Right cardiac atrium (tissue), 5 donors: ENCODE measurements at regions of chr19 and their contacts with region 1.

Region 1: GRCh38 chr19:18571564-18572300 is at the start of gene UBA52:
- DNase-seq: peak; percentile 99
- ATAC-seq: peak; percentile 96 to 97
- H3K4me3 ChIP-seq: peak within 1 kb of the TSS; percentile 78
- H3K27ac ChIP-seq: peak within 1 kb of the TSS; percentile 88
- H3K4me1 ChIP-seq: peaks cover 8% of the 10 kb centered on the region
- H3K27me3 ChIP-seq: no peaks in the 10 kb centered on the region
- total RNA-seq, gene UBA52: 712 to 793 (median 725) TPM

Region 2: GRCh38 chr19:18239303-18239702 is 332.4 kb before region 1 on chr19:
- intact Hi-C with region 1: no loop called
- DNase-seq: peak in 1 of 3 donors; percentile 29
- ATAC-seq: no peak
- H3K4me3 ChIP-seq: no peak overlapping the region
- H3K27ac ChIP-seq: no peak overlapping the region
- H3K4me1 ChIP-seq: no peaks in the 10 kb centered on the region
- H3K27me3 ChIP-seq: no peaks in the 10 kb centered on the region

Region 3: GRCh38 chr19:18450931-18451845 is 120.5 kb before region 1 on chr19:
- intact Hi-C with region 1: loop called in 1 of 4 experiments (anchors 10 kb)
- DNase-seq: peak; percentile 84 to 95 (median 95)
- ATAC-seq: peak; percentile 83 to 84
- H3K4me3 ChIP-seq: no peak overlapping the region
- H3K27ac ChIP-seq: no peak overlapping the region
- H3K4me1 ChIP-seq: no peaks in the 10 kb centered on the region
- H3K27me3 ChIP-seq: no peaks in the 10 kb centered on the region

Region 4: GRCh38 chr19:18985257-18985656 is 413.5 kb after region 1 on chr19:
- intact Hi-C with region 1: no loop called
- DNase-seq: no peak
- ATAC-seq: peak in 1 of 2 donors; percentile 46
- H3K4me3 ChIP-seq: no peak overlapping the region
- H3K27ac ChIP-seq: no peak overlapping the region
- H3K4me1 ChIP-seq: no peaks in the 10 kb centered on the region
- H3K27me3 ChIP-seq: no peaks in the 10 kb centered on the region